ENCODE measurements at regions of chr19 and their contacts with region 1.

Region 1: GRCh38 chr19:2561895-2562294 is 86.0 kb downstream of the GADD45B start:
- DNase-seq: peak; percentile 73
- ATAC-seq: peak; percentile 92
- H3K4me3 Mint-ChIP-seq: peak overlapping the region; percentile 82
- H3K27ac Mint-ChIP-seq: peak overlapping the region; percentile 96
- H3K4me1 Mint-ChIP-seq: peaks cover 33% of the 10 kb centered on the region
- H3K27me3 Mint-ChIP-seq: no peaks in the 10 kb centered on the region

Region 2: GRCh38 chr19:2543463-2544442 is 18.1 kb before region 1 on chr19:
- POLR2A ChIA-PET with region 1: interaction called, 18 read pairs
- DNase-seq: peak; percentile 76
- ATAC-seq: peak; percentile 91
- H3K4me3 Mint-ChIP-seq: peak overlapping the region; percentile 75
- H3K27ac Mint-ChIP-seq: peak overlapping the region; percentile 90
- H3K4me1 Mint-ChIP-seq: peaks cover 15% of the 10 kb centered on the region
- H3K27me3 Mint-ChIP-seq: no peaks in the 10 kb centered on the region

Region 3: DNA sequence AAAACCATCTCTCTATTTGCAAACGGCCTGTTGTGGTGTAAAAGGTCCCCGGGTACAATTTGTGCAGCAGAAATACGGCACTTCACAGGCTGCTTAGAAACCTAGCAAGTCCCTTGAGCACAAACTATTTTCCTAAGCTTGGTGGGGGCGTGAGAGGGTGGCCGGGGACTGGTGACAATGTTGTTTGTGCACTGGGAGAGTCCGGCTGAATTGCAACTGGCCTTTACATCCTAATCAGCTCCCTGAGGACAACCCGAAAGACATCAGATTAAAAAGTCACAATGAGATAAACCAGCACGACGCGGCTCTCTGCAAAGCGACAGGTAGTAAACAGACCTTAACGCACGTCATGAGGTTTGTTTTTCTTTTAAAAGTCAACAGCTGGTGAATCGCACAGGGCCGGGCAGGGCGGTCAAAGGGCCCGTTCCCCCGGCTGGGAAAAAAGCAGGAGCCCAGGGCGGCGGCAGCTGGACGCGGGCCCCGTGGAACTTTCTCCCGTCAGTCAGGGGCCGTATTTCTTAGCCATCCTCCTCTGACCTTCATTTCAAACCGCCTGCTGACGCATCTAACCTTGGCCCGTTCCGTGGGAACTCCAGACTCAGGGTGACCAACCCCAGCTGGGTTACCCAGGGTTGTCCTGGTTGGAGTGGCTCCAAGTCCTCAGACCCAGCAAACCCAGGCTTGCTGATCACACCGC is 26.3 kb after region 1 on chr19:
- POLR2A ChIA-PET with region 1: no interaction called
- DNase-seq: no peak
- ATAC-seq: no peak
- H3K4me3 Mint-ChIP-seq: no peak overlapping the region
- H3K27ac Mint-ChIP-seq: no peak overlapping the region
- H3K4me1 Mint-ChIP-seq: no peaks in the 10 kb centered on the region
- H3K27me3 Mint-ChIP-seq: peaks cover 21% of the 10 kb centered on the region

Region 4: GRCh38 chr19:2602391-2603181 is 40.7 kb after region 1 on chr19:
- POLR2A ChIA-PET with region 1: interaction called, 18 read pairs
- DNase-seq: no peak
- ATAC-seq: no peak
- H3K4me3 Mint-ChIP-seq: no peak overlapping the region
- H3K27ac Mint-ChIP-seq: no peak overlapping the region
- H3K4me1 Mint-ChIP-seq: peaks cover 11% of the 10 kb centered on the region
- H3K27me3 Mint-ChIP-seq: peaks cover 2% of the 10 kb centered on the region

Region 5: DNA sequence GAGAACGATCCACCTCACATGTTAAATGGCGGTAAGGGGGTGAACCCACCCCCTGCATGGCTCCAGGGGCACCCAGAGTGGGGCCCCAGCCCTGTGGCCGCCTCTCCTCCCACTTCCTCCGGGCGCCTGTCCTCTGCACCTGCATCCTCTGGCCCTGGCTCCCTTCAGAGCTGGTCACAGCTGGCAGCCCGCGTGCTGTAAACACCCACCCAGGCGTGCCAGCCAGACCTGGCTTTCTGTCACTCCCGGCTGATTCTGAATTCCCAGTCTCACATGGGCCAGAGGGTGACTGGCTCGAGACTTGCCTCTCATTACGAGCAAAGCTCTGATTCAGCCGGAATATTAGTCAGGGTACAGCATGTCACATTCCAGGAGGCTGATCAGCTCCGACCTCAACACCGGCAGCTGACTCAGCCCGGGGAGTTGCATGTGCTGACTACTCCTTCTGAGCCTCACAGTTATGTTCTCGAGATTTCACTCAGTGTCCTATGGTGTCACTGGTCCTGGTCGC is 65.5 kb after region 1 on chr19:
- POLR2A ChIA-PET with region 1: interaction called, 23 read pairs
- DNase-seq: no peak
- ATAC-seq: no peak
- H3K4me3 Mint-ChIP-seq: peak overlapping the region; percentile 5
- H3K27ac Mint-ChIP-seq: peak overlapping the region; percentile 21
- H3K4me1 Mint-ChIP-seq: peaks cover 18% of the 10 kb centered on the region
- H3K27me3 Mint-ChIP-seq: no peaks in the 10 kb centered on the region